Heart right ventricle (tissue), 16 donors: ENCODE measurements at regions of chr20 and their contacts with region 1.

Region 1: GRCh38 chr20:45020236-45020886 is 54.0 kb downstream of the STK4 start:
- DNase-seq: no peak
- ATAC-seq: no peak
- H3K4me3 ChIP-seq: no peak overlapping the region
- H3K27ac ChIP-seq: no peak overlapping the region
- H3K4me1 ChIP-seq: peaks cover 0 to 42% (median 22%) of the 10 kb centered on the region in 9 donors
- H3K27me3 ChIP-seq: no peaks in the 10 kb centered on the region
- CTCF ChIP-seq: no peak

Region 2: DNA sequence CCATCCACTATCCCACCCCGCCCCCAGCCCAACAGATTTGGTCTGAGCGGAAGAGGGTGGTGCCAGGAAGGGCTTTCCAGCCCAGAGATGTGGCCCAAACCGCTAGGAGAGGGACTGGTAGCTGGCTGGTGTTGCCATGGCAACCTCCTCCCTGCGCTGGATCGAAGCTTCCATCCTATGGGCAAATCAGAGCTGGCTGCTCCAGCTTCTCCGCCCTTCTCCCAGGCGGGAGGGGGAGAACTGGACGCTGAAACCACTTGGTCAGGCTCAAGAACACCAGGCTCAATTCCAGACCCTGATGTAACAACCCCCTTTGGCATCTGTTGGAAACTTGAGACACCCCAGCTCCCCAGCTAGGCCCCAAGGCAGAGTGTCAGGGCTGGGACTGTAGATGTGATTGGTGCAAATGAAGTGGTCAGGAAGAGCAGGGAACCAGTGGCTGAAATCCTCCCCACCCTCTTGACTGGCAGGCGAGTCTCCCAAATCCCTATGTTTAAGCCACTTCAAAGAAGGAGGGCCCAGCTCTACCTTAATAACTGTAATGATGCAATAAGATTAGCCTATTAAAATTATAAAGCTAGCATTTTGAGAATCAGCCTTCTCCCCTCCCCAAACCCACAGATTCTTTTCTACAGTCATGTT is 214.3 kb before region 1 on chr20:
- intact Hi-C with region 1: no loop called
- DNase-seq: peak in 1 of 2 donors; percentile 8
- ATAC-seq: peak in 3 of 8 donors; percentile 20 to 33 (median 26)
- H3K4me3 ChIP-seq: no peak overlapping the region
- H3K27ac ChIP-seq: no peak overlapping the region
- H3K4me1 ChIP-seq: peaks cover 0 to 5% (median 0%) of the 10 kb centered on the region in 9 donors
- H3K27me3 ChIP-seq: peaks cover 8 to 69% (median 57%) of the 10 kb centered on the region in 7 donors
- CTCF ChIP-seq: no peak

Region 3: DNA sequence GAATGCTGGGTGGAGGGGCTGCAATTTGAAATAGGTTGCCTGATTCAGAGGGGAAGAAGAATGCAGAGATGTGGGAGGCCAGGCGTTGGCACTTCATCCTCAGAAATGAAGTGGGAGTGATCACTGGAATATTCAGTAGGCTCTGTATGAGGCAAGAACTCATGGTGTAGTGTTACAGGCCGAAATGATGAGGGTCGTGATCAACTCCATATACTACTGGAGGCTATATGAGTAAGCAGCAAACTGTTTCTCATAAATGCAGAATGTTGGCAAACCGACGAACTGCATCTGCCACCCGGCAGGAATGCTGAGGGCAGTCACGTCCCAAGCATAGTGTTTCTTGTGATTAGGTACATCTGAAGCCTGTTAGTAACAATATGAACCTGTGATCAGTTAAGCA is 67.9 kb after region 1 on chr20:
- intact Hi-C with region 1: no loop called
- DNase-seq: no peak
- ATAC-seq: no peak
- H3K4me3 ChIP-seq: no peak overlapping the region
- H3K27ac ChIP-seq: no peak overlapping the region
- H3K4me1 ChIP-seq: no peaks in the 10 kb centered on the region
- H3K27me3 ChIP-seq: no peaks in the 10 kb centered on the region
- CTCF ChIP-seq: no peak

Region 4: GRCh38 chr20:45149062-45149461 is 128.7 kb after region 1 on chr20:
- intact Hi-C with region 1: no loop called
- DNase-seq: no peak
- ATAC-seq: no peak
- H3K4me3 ChIP-seq: no peak overlapping the region
- H3K27ac ChIP-seq: no peak overlapping the region
- H3K4me1 ChIP-seq: peaks cover 0 to 8% (median 0%) of the 10 kb centered on the region in 9 donors
- H3K27me3 ChIP-seq: peaks cover 0 to 46% (median 28%) of the 10 kb centered on the region in 7 donors
- CTCF ChIP-seq: no peak

Region 5: GRCh38 chr20:45293041-45294002 is 273.0 kb after region 1 on chr20:
- intact Hi-C with region 1: loop called in 1 of 10 experiments (anchors 5 kb)
- DNase-seq: peak; percentile 77 to 82
- ATAC-seq: peak; percentile 79 to 90 (median 86)
- H3K4me3 ChIP-seq: peak overlapping the region; percentile 13 to 61 (median 52)
- H3K27ac ChIP-seq: no peak overlapping the region
- H3K4me1 ChIP-seq: peaks cover 0 to 21% (median 9%) of the 10 kb centered on the region in 9 donors
- H3K27me3 ChIP-seq: peaks cover 5 to 56% (median 43%) of the 10 kb centered on the region in 7 donors
- CTCF ChIP-seq: peak; percentile 87 to 96 (median 93)